CD14-positive monocyte (primary cell): ENCODE measurements at regions of chr1 and their contacts with region 1.

Region 1: DNA sequence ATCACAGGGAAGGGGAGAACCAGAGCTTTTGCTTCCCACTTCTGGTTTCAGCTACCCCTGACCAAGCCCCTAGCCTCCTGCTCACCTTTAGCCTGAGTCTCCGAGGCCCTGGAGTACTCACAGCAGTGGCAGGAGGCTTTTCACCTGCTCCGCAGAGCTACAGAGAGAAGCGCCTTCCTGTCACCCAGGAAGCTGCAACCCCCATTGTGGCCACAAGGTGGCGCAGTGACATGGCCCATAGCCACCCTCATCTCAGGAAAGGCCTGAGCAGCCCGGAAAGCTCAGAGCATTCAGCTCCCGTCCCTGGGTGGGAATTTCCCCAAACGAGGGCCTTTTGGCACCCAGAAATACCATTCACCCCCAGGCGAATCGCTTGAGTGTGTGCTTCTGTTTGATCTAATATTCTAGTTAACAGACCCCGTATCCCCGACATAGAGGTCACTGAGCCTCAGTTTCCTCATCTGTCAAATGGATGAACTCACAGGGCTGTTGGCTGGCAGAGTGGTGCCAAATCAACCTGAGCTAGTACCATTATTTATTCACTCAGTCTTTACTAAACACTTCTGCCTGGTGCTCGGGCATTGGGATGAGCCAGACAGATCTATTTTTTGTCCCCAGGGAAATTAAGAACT is 25.3 kb downstream of the A3GALT2 start:
- DNase-seq: peak; percentile 74 to 79 (median 76)
- H3K4me3 ChIP-seq: no peak overlapping the region
- H3K4me3 Mint-ChIP-seq: no peak overlapping the region
- H3K27ac ChIP-seq: no peak overlapping the region
- H3K27ac Mint-ChIP-seq: no peak overlapping the region
- H3K4me1 ChIP-seq: peaks cover 5 to 9% of the 10 kb centered on the region in 2 donors
- H3K4me1 Mint-ChIP-seq: peaks cover 5% of the 10 kb centered on the region
- H3K27me3 ChIP-seq: no peaks in the 10 kb centered on the region
- H3K27me3 Mint-ChIP-seq: no peaks in the 10 kb centered on the region
- CTCF ChIP-seq: peak; percentile 96

Region 2: DNA sequence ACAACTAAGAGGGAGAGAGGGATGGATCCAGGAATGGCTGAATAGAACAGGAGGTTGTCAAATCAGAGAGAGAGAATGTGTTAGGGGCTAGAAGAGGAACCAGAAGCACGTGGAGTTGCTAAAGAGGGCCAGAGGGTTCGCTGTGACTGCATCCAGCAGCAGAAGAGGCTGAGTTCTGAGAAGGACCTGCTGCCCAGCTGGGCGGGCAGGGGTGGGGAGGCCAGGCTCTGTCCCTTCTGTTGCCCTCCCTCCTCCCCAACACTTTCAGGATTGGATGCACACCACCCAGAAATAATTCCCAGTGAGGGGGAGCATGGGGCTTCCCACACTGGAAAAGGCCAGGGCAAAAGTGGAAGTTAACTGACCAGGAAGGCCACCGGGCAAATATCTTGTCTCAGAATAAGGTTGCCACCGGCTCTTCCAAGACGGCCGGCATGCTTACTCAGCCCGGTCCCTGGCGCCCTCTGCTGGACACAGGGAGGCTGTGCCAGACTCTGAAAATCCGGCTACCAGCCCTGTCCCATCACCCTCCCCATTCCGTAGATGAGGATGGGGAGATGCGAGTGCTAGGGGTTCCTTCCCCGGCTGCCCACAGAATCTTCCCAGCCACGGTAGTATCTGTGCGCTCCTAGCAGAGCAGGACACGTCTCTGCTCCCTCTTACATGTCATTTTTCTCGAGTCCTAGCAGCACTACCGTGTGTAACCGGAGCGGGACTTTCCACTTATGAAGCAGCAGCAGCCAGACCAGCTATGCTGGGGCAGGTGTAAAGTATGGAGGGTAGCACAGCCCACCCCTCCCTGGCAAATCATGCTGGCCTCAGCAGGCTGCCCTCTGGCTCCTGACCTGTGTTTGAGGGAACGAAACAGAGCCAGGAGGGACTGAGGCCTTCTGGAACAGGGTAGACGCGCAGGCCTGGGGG is 72.2 kb after region 1 on chr1:
- intact Hi-C with region 1: loop called (anchors 1 to 2 kb)
- DNase-seq: peak; percentile 71 to 83 (median 80)
- H3K4me3 ChIP-seq: no peak overlapping the region
- H3K4me3 Mint-ChIP-seq: peak overlapping the region in 1 of 2 donors; percentile 60
- H3K27ac ChIP-seq: no peak overlapping the region
- H3K27ac Mint-ChIP-seq: peak overlapping the region in 5 of 7 donors; percentile 45 to 82 (median 65)
- H3K4me1 ChIP-seq: peaks cover 12 to 13% of the 10 kb centered on the region in 2 donors
- H3K4me1 Mint-ChIP-seq: peaks cover 16% of the 10 kb centered on the region
- H3K27me3 ChIP-seq: no peaks in the 10 kb centered on the region
- H3K27me3 Mint-ChIP-seq: peaks cover 0 to 4% (median 3%) of the 10 kb centered on the region in 3 donors
- CTCF ChIP-seq: peak; percentile 96

Region 3: GRCh38 chr1:33466159-33466558 is 170.6 kb after region 1 on chr1:
- intact Hi-C with region 1: loop called (anchors 5 kb)
- DNase-seq: no peak
- H3K4me3 ChIP-seq: no peak overlapping the region
- H3K4me3 Mint-ChIP-seq: no peak overlapping the region
- H3K27ac ChIP-seq: no peak overlapping the region
- H3K27ac Mint-ChIP-seq: peak overlapping the region in 2 of 7 donors; percentile 17 to 20
- H3K4me1 ChIP-seq: peaks cover 29 to 32% of the 10 kb centered on the region in 2 donors
- H3K4me1 Mint-ChIP-seq: peaks cover 41% of the 10 kb centered on the region
- H3K27me3 ChIP-seq: no peaks in the 10 kb centered on the region
- H3K27me3 Mint-ChIP-seq: peaks cover 0 to 4% (median 2%) of the 10 kb centered on the region in 3 donors
- CTCF ChIP-seq: no peak

Region 4: GRCh38 chr1:33472349-33472980 is 176.9 kb after region 1 on chr1 and contains the start of gene ZSCAN20:
- intact Hi-C with region 1: loop called (anchors 5 kb)
- DNase-seq: peak; percentile 80 to 88 (median 81)
- H3K4me3 ChIP-seq: peak within 1 kb of the TSS; percentile 52 to 78 (median 64)
- H3K4me3 Mint-ChIP-seq: peak within 1 kb of the TSS; percentile 80 to 88
- H3K27ac ChIP-seq: peak within 1 kb of the TSS in 1 of 2 donors; percentile 43
- H3K27ac Mint-ChIP-seq: peak within 1 kb of the TSS; percentile 20 to 91 (median 87)
- H3K4me1 ChIP-seq: peaks cover 11 to 17% of the 10 kb centered on the region in 2 donors
- H3K4me1 Mint-ChIP-seq: peaks cover 21% of the 10 kb centered on the region
- H3K27me3 ChIP-seq: no peaks in the 10 kb centered on the region
- H3K27me3 Mint-ChIP-seq: peaks cover 0 to 5% (median 2%) of the 10 kb centered on the region in 3 donors
- CTCF ChIP-seq: no peak
- polyA plus RNA-seq, gene ZSCAN20: 0.29 to 0.51 (median 0.29) TPM